ENCODE measurements at regions of chr14 and their contacts with region 1.

Region 1: GRCh38 chr14:101439023-101439422 is 122.3 kb upstream of the DIO3 start:
- DNase-seq: no peak
- H3K27ac ChIP-seq: no peak overlapping the region
- CTCF ChIP-seq: no peak

Region 2: DNA sequence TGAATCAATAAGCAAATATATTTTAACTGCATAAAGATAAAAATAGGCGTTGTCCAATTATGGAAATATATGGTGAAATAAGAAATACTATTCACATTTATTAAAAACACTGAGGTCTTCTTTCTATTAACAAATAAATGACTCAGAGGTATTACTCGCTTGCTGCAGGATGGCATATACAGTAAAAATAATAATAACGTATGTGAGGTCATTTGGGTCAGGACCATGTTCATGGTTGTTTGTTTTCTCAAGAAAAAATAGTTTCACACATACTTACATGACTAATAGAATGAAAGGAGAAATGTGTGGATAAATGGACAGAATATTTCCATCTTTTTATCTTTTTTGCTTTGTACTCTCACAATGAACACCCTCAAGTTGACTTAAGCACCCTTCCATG is 489.0 kb before region 1 on chr14:
- CTCF ChIA-PET with region 1: interaction called, 11 read pairs
- POLR2A ChIA-PET with region 1: no interaction called
- DNase-seq: no peak
- H3K27ac ChIP-seq: no peak overlapping the region
- CTCF ChIP-seq: no peak

Region 3: GRCh38 chr14:101559624-101560533 is 120.9 kb after region 1 on chr14:
- CTCF ChIA-PET with region 1: no interaction called
- POLR2A ChIA-PET with region 1: no interaction called
- DNase-seq: no peak
- H3K27ac ChIP-seq: no peak overlapping the region
- CTCF ChIP-seq: no peak

Measured in RWPE1 (cell line).